Psoas muscle (tissue), 8 donors: ENCODE measurements at regions of chr20 and their contacts with region 1.

Region 1: DNA sequence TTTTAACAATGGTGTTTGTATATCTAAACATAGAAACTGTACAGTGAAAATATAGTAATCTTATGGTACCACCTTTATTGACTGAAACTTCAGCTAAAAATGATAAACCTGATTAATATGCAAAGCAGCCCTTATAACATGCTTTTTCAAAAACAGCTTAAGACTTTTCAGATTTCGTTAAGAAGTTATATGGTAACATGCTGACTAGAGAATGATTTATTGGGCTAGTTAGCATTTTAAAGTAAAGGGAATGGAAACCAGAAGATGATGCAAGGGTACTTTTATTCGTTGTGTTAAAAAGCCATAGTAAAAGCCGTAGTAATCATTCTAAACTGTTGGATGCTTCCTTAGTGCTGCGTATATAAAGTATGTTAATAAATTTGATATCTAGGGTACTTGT is 50.5 kb downstream of the CBFA2T2 start:
- DNase-seq: no peak
- ATAC-seq: no peak
- H3K4me3 ChIP-seq: no peak overlapping the region
- H3K27ac ChIP-seq: no peak overlapping the region
- H3K4me1 ChIP-seq: peaks cover 14% of the 10 kb centered on the region
- H3K27me3 ChIP-seq: no peaks in the 10 kb centered on the region
- CTCF ChIP-seq: no peak

Region 2: GRCh38 chr20:33584976-33585375 is 44.5 kb after region 1 on chr20:
- intact Hi-C with region 1: loop called in 1 of 2 experiments (anchors 5 kb)
- DNase-seq: no peak
- ATAC-seq: no peak
- H3K4me3 ChIP-seq: no peak overlapping the region
- H3K27ac ChIP-seq: no peak overlapping the region
- H3K4me1 ChIP-seq: peaks cover 6% of the 10 kb centered on the region
- H3K27me3 ChIP-seq: no peaks in the 10 kb centered on the region
- CTCF ChIP-seq: no peak